CD4-positive, alpha-beta memory T cell (primary cell): ENCODE measurements at regions of chr10 and their contacts with region 1.

Region 1: DNA sequence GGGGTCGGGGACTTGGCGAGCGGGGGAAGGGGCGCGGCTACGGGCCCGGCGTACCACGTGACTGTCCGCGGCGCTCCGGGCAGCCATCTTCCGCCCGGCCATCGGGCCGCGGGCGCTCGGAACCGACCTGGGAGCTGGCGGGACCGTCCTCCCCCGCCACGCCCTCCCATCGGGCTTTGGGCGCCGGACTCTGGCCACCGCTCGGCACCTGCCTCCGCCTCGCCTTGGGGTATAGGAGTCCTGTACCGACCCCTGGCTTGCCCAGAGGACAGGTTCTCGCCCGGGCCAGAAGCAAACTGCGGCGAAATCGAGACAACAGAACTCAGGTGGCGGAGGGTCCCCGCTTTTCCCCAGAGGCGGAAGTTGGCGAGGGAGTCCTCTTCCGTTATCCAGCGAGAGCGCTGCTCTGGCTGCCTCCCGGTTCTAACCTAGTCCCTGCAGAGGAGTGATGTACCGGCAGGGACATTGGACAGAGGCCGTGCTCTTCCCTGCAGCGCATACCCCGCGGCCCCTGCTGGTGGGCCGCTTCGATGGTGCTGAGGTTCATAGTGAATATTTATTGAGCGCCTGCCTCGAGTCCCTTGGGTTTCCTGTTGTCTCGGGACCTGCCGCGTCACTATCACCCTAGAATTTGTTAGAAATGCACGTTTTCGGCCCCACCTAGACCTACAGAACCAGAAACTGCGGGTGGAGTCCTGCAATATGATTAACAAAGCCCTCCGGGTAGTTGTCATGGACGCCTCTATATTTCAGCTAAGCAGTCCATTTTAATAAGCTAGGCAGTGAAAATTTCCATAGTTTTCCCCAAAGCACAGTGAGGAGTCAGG is 1.3 kb upstream of the SGMS1 start:
- DNase-seq: peak; percentile 61 to 80 (median 65)
- H3K4me3 ChIP-seq: peak overlapping the region; percentile 68 to 97
- H3K4me3 Mint-ChIP-seq: peak overlapping the region; percentile 93 to 98 (median 96)
- H3K27ac ChIP-seq: peak overlapping the region; percentile 99
- H3K27ac Mint-ChIP-seq: peak overlapping the region; percentile 90 to 99 (median 98)
- H3K4me1 ChIP-seq: peaks cover 26% of the 10 kb centered on the region
- H3K4me1 Mint-ChIP-seq: peaks cover 13 to 41% (median 21%) of the 10 kb centered on the region in 4 donors
- H3K27me3 ChIP-seq: no peaks in the 10 kb centered on the region
- H3K27me3 Mint-ChIP-seq: no peaks in the 10 kb centered on the region

Region 2: GRCh38 chr10:49538381-49539319 is 1086.4 kb before region 1 on chr10 and contains the start of gene ERCC6:
- CTCF ChIA-PET with region 1: no interaction called
- POLR2A ChIA-PET with region 1: interaction called, 3 read pairs
- intact Hi-C with region 1: loop called (anchors 5 kb)
- DNase-seq: peak; percentile 92 to 97 (median 94)
- H3K4me3 ChIP-seq: peak within 1 kb of the TSS; percentile 77 to 78
- H3K4me3 Mint-ChIP-seq: peak within 1 kb of the TSS; percentile 92 to 98 (median 94)
- H3K27ac ChIP-seq: peak within 1 kb of the TSS; percentile 72
- H3K27ac Mint-ChIP-seq: peak within 1 kb of the TSS; percentile 93 to 98 (median 97)
- H3K4me1 ChIP-seq: peaks cover 17% of the 10 kb centered on the region
- H3K4me1 Mint-ChIP-seq: peaks cover 26 to 44% (median 36%) of the 10 kb centered on the region in 4 donors
- H3K27me3 ChIP-seq: no peaks in the 10 kb centered on the region
- H3K27me3 Mint-ChIP-seq: peaks cover 12 to 13% of the 10 kb centered on the region in 2 donors
- total RNA-seq, gene ERCC6: 46.0 to 46.7 TPM

Region 3: DNA sequence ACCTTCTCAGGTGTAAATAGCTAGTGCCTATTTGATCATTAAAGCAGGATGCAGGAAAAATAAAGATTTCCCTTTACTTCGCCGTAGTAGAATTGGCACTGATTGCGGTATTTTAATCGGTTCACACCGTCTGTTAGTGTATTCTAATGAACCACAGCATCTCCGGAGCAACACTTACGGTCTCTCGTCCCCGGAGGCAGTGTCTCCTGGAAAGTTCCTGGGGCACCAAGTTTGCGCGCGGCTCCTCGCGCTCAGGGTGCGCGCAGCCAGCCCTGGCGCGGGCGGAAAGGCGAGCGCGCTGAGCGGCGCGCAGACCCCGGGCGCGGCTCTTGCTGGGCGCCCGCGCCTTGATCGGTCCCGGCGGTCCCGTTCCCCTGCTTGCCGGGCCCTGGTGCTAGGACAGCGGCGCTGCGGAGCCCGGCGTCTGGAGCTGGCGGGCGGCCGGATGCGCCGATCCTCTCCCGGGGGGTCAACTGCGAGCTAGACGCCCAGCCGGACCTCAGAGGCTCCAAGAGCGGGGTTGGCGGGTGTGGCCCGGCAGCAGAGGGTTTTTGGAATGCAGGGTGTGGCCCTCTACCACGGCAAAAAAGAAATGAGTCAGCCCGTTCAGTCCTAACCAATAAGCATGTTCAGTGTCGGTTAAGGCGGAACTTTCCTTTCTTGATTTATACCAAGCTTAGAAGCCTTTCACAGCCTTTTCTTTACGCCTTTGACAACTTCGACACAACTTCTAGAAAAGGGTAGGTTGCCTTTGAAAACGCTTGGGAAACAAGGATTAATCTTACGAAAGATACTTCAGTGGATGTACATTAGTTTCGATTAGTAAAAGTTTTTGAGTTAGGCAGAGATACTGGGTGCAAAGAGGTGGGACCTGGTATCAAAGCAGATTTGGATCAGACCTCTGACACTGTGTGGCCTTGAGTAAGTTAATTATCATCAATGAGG is 206.9 kb before region 1 on chr10:
- CTCF ChIA-PET with region 1: interaction called, 8 read pairs
- POLR2A ChIA-PET with region 1: interaction called, 11 read pairs
- intact Hi-C with region 1: loop called (anchors 2 kb)
- DNase-seq: peak; percentile 38 to 50 (median 39)
- H3K4me3 ChIP-seq: peak overlapping the region; percentile 58 to 62
- H3K4me3 Mint-ChIP-seq: peak overlapping the region; percentile 91 to 95 (median 94)
- H3K27ac ChIP-seq: peak overlapping the region; percentile 6
- H3K27ac Mint-ChIP-seq: peak overlapping the region; percentile 67 to 90 (median 70)
- H3K4me1 ChIP-seq: peaks cover 33% of the 10 kb centered on the region
- H3K4me1 Mint-ChIP-seq: peaks cover 26 to 47% (median 41%) of the 10 kb centered on the region in 4 donors
- H3K27me3 ChIP-seq: no peaks in the 10 kb centered on the region
- H3K27me3 Mint-ChIP-seq: no peaks in the 10 kb centered on the region

Region 4: GRCh38 chr10:50561816-50562215 is 63.3 kb before region 1 on chr10:
- CTCF ChIA-PET with region 1: interaction called, 32 read pairs
- POLR2A ChIA-PET with region 1: interaction called, 3 read pairs
- intact Hi-C with region 1: loop called (anchors 1 kb)
- DNase-seq: peak in 3 of 5 donors; percentile 15 to 25 (median 16)
- H3K4me3 ChIP-seq: no peak overlapping the region
- H3K4me3 Mint-ChIP-seq: no peak overlapping the region
- H3K27ac ChIP-seq: no peak overlapping the region
- H3K27ac Mint-ChIP-seq: peak overlapping the region in 2 of 7 donors; percentile 20 to 72
- H3K4me1 ChIP-seq: no peaks in the 10 kb centered on the region
- H3K4me1 Mint-ChIP-seq: peaks cover 19 to 47% (median 21%) of the 10 kb centered on the region in 4 donors
- H3K27me3 ChIP-seq: no peaks in the 10 kb centered on the region
- H3K27me3 Mint-ChIP-seq: no peaks in the 10 kb centered on the region

Region 5: GRCh38 chr10:50614444-50615137 is 10.5 kb before region 1 on chr10:
- CTCF ChIA-PET with region 1: interaction called, 13 read pairs
- POLR2A ChIA-PET with region 1: interaction called, 11 read pairs
- intact Hi-C with region 1: no loop called
- DNase-seq: peak in 2 of 5 donors; percentile 11 to 27
- H3K4me3 ChIP-seq: no peak overlapping the region
- H3K4me3 Mint-ChIP-seq: no peak overlapping the region
- H3K27ac ChIP-seq: no peak overlapping the region
- H3K27ac Mint-ChIP-seq: peak overlapping the region in 2 of 7 donors; percentile 51 to 58
- H3K4me1 ChIP-seq: peaks cover 49% of the 10 kb centered on the region
- H3K4me1 Mint-ChIP-seq: peaks cover 48 to 82% (median 68%) of the 10 kb centered on the region in 4 donors
- H3K27me3 ChIP-seq: no peaks in the 10 kb centered on the region
- H3K27me3 Mint-ChIP-seq: no peaks in the 10 kb centered on the region

Region 6: GRCh38 chr10:50645236-50645635 is 20.2 kb after region 1 on chr10:
- CTCF ChIA-PET with region 1: interaction called, 3 read pairs
- POLR2A ChIA-PET with region 1: interaction called, 12 read pairs
- intact Hi-C with region 1: no loop called
- DNase-seq: no peak
- H3K4me3 ChIP-seq: no peak overlapping the region
- H3K4me3 Mint-ChIP-seq: no peak overlapping the region
- H3K27ac ChIP-seq: no peak overlapping the region
- H3K27ac Mint-ChIP-seq: no peak overlapping the region
- H3K4me1 ChIP-seq: no peaks in the 10 kb centered on the region
- H3K4me1 Mint-ChIP-seq: peaks cover 0 to 11% (median 4%) of the 10 kb centered on the region in 4 donors
- H3K27me3 ChIP-seq: no peaks in the 10 kb centered on the region
- H3K27me3 Mint-ChIP-seq: no peaks in the 10 kb centered on the region

Region 7: GRCh38 chr10:50739618-50740292 is 114.7 kb after region 1 on chr10 and contains the start of gene ASAH2B:
- CTCF ChIA-PET with region 1: no interaction called
- POLR2A ChIA-PET with region 1: interaction called, 6 read pairs
- intact Hi-C with region 1: loop called (anchors 1 kb)
- DNase-seq: peak; percentile 68 to 75 (median 73)
- H3K4me3 ChIP-seq: peak within 1 kb of the TSS; percentile 57 to 97
- H3K4me3 Mint-ChIP-seq: peak within 1 kb of the TSS; percentile 94 to 99 (median 98)
- H3K27ac ChIP-seq: peak within 1 kb of the TSS; percentile 50
- H3K27ac Mint-ChIP-seq: peak within 1 kb of the TSS; percentile 71 to 97 (median 93)
- H3K4me1 ChIP-seq: peaks cover 11% of the 10 kb centered on the region
- H3K4me1 Mint-ChIP-seq: peaks cover 17 to 37% (median 25%) of the 10 kb centered on the region in 4 donors
- H3K27me3 ChIP-seq: no peaks in the 10 kb centered on the region
- H3K27me3 Mint-ChIP-seq: no peaks in the 10 kb centered on the region
- total RNA-seq, gene ASAH2B: 2.8 to 2.9 TPM